ENCODE measurements at regions of chr11 and their contacts with region 1.

Region 1: DNA sequence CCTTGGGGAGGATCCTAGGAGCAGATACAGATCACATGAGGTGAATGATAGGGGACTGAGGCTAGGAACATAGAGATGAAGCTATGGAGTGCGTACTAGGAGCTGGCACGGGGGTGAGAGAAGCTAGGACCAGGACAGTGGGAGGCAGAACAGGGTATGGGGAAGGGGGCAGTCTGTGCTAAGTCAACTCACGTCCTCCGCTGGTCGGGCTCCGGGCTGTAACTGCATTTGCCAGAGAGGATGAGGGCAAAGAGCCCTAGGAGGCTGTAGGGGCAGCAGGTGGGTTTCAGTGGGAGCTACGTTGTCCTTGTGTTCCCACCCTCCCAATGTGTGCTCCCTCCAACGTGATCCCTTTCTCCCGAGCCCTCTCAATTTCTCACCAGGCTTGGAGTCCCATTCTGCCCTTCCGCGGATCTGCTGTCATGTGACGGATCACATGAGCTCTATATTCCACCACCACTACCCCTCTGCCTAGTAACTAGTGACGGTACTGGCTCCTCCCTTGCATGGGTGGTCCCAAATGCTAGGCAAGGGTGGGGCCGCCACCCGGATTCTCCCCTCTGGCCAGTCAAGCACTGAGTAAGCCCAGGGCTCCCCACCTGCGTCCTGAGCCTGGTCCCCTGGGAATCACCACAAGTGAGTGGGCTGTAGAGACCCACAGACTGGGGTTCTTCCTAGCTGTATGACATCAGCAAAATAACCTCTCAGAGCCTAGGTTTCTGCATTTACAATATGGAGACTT is at the start of gene TPP1:
- DNase-seq: peak; percentile 94
- H3K4me3 ChIP-seq: peak within 1 kb of the TSS; percentile 65
- H3K27ac ChIP-seq: peak within 1 kb of the TSS; percentile 51
- H3K4me1 ChIP-seq: peaks cover 10% of the 10 kb centered on the region
- H3K27me3 ChIP-seq: no peaks in the 10 kb centered on the region
- CTCF ChIP-seq: no peak
- total RNA-seq, gene TPP1: 42.2 and 53.0 TPM in 2 replicates

Region 2: DNA sequence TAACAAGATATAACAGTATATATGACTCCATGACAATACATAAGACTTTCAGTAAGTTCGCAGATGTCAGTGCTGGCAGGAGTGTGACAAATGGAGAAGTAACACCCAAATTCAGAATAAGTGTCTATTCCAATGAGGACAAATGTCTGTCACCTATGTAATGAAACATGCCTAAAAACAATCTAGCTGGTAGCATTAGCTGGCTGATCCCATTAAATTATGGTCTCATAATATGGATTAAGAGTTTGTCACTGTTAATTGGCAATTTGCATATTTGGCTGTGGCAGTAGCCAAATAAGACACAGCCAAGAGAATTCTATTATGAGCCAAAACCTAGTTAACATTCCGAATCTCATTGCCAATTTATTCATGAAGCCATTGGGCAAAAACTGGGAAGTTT is 268.7 kb before region 1 on chr11:
- CTCF ChIA-PET with region 1: no interaction called
- POLR2A ChIA-PET with region 1: no interaction called
- intact Hi-C with region 1: no loop called
- DNase-seq: no peak
- H3K4me3 ChIP-seq: no peak overlapping the region
- H3K27ac ChIP-seq: no peak overlapping the region
- H3K4me1 ChIP-seq: no peaks in the 10 kb centered on the region
- H3K27me3 ChIP-seq: no peaks in the 10 kb centered on the region
- CTCF ChIP-seq: no peak

Region 3: GRCh38 chr11:6473481-6474422 is 145.4 kb before region 1 on chr11 and contains the start of gene TRIM3:
- CTCF ChIA-PET with region 1: no interaction called
- POLR2A ChIA-PET with region 1: no interaction called
- intact Hi-C with region 1: loop called (anchors 5 kb)
- DNase-seq: peak; percentile 88
- H3K4me3 ChIP-seq: peak within 1 kb of the TSS; percentile 82
- H3K27ac ChIP-seq: peak within 1 kb of the TSS; percentile 86
- H3K4me1 ChIP-seq: peaks cover 25% of the 10 kb centered on the region
- H3K27me3 ChIP-seq: no peaks in the 10 kb centered on the region
- CTCF ChIP-seq: peak; percentile 46
- total RNA-seq, gene TRIM3: 34.2 and 37.1 TPM in 2 replicates

Region 4: DNA sequence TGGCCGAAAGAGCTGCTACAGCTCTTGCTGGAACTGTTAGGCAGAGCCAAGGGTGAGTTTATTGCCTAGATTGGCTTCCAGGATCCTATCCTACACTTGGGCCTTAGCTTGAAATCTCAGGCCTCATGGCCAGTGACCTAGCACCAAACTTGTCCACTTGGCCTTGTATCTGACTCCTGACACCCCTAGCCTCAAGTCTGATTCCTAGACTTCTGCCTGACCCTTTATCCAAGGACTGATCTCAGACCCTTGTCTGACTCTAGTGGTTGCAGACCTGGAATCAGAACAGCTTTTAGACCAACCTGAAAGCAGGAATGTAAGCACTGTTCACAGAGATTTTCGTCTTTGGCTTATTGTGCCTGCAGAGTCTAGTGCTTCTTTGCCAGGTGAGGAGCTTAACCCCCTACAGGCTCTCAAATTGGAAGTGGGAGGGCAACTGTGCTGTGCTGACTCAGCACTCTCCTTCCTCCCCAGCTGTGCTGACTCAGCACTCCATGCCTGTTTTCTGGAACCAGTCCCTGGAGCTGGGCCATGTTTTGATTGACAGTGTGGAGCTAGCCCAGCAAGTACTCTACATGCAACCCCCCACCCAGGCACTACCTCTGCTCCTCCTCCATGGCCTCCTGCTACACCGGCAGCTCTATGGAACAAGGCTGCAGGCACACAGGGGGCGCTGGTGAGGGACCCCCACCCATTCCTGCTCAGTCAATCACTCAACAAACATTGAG is 50.8 kb before region 1 on chr11:
- CTCF ChIA-PET with region 1: no interaction called
- POLR2A ChIA-PET with region 1: no interaction called
- intact Hi-C with region 1: no loop called
- DNase-seq: peak; percentile 85
- H3K4me3 ChIP-seq: no peak overlapping the region
- H3K27ac ChIP-seq: no peak overlapping the region
- H3K4me1 ChIP-seq: peaks cover 11% of the 10 kb centered on the region
- H3K27me3 ChIP-seq: no peaks in the 10 kb centered on the region
- CTCF ChIP-seq: peak; percentile 31; the same call in 1 of the 2 replicates

Region 5: DNA sequence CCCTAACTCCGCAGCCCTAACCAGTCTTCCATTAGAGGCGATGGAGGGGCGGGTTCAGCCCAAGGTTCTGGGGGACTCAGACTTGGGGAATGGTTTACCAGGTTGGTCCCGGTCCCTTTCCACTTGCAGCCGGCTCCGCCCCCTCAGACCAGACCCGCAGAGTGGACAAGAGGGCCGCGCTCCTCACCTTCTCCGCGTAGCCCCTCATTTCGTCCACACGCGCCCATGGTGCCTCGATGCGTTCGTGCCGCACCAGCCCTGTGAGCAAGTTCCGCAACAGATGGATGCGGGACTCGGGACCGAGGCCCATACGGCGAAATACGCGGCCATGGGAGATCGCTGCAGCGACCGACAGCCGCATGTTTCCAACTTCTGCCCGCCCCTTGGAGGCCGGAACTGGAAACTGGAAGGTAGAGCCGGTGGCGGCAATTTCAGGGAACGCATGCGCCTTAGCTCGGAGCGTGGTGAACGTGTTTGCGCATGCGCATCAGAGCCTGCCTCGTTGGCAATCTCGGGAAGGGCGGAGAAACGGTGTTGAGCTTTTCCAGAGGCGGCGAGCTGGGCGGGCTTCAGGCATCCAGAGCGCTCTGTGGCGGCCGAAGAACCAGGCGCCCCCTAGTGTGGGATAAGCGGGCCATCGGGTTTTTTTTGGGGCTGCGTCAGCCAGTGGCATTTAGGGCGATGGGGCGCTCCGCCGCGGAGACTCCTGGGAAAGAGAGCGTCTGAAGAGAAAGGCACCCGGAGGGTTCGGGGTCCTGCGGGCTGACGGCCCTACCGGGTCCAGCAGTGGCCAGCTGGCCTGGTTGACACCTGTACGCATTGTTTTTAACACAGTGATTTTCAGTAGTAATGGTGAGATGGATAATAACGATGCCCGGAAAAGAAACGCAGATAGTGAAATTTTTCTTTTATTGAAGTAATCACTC is 64.0 kb after region 1 on chr11 and contains the start of gene MRPL17:
- CTCF ChIA-PET with region 1: interaction called, 3 read pairs
- POLR2A ChIA-PET with region 1: no interaction called
- intact Hi-C with region 1: loop called (anchors 2 kb)
- DNase-seq: peak; percentile 99
- H3K4me3 ChIP-seq: peak within 1 kb of the TSS; percentile 100
- H3K27ac ChIP-seq: peak within 1 kb of the TSS; percentile 92
- H3K4me1 ChIP-seq: peaks cover 4% of the 10 kb centered on the region
- H3K27me3 ChIP-seq: no peaks in the 10 kb centered on the region
- CTCF ChIP-seq: peak; percentile 94
- total RNA-seq, gene MRPL17: 82.5 and 98.5 TPM in 2 replicates

Region 6: DNA sequence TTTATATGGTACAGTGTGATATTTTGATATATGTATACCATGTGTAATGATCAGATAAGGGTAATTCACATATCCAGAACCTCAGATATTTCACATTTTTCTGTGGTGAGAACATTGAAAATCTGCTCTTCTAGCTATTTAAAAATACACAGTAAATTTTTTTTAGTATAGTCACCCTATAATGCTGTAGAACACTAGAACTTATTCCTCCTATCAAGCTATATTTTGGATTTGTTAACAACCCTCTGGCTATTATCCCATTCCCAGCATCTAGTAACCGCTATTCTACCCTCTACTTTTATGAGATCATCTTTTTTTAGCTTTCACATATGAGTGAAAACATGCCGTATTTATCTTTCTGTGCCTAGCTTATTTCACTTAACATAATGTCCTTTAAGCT is 567.0 kb after region 1 on chr11:
- CTCF ChIA-PET with region 1: no interaction called
- POLR2A ChIA-PET with region 1: no interaction called
- intact Hi-C with region 1: no loop called
- DNase-seq: no peak
- H3K4me3 ChIP-seq: no peak overlapping the region
- H3K27ac ChIP-seq: no peak overlapping the region
- H3K4me1 ChIP-seq: no peaks in the 10 kb centered on the region
- H3K27me3 ChIP-seq: no peaks in the 10 kb centered on the region
- CTCF ChIP-seq: no peak

Measured in A673 (cell line).